B cell (primary cell): ENCODE measurements at regions of chr13 and their contacts with region 1.

Region 1: DNA sequence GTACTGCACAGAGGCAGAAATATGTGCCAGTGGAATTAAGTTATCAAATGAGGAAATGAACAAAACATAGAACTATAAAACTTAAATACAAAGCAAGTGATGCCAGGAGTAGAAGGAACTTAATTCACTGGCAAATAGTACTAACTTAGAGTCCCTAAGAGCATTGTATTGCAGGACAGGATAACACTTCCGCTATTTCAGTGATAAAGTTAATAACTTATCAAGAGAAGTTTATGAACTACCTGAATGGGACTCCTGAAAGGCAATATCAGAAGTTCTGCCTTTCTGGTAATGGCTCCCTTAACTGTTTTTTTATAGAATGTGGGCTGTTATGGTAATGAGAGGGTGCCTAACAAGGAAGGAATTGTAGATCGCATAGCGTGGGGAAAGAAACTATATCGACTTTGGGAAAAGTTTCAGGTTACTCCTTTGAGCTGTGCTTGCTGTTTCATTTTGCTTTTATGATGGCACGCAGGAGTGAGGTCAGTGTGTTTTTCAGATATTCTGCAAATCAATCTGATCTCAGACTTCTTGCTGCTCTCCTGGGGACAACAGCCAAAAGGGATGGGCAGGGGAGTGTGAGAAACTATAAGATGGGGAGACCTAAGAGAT is 95.3 kb upstream of the MLNR start:
- DNase-seq: no peak
- ATAC-seq: no peak
- H3K4me3 ChIP-seq: no peak overlapping the region
- H3K4me3 Mint-ChIP-seq: no peak overlapping the region
- H3K27ac ChIP-seq: no peak overlapping the region
- H3K27ac Mint-ChIP-seq: peak overlapping the region; percentile 3
- H3K4me1 ChIP-seq: no peaks in the 10 kb centered on the region
- H3K4me1 Mint-ChIP-seq: peaks cover 9% of the 10 kb centered on the region
- H3K27me3 ChIP-seq: no peaks in the 10 kb centered on the region
- H3K27me3 Mint-ChIP-seq: no peaks in the 10 kb centered on the region
- CTCF ChIP-seq: no peak

Region 2: DNA sequence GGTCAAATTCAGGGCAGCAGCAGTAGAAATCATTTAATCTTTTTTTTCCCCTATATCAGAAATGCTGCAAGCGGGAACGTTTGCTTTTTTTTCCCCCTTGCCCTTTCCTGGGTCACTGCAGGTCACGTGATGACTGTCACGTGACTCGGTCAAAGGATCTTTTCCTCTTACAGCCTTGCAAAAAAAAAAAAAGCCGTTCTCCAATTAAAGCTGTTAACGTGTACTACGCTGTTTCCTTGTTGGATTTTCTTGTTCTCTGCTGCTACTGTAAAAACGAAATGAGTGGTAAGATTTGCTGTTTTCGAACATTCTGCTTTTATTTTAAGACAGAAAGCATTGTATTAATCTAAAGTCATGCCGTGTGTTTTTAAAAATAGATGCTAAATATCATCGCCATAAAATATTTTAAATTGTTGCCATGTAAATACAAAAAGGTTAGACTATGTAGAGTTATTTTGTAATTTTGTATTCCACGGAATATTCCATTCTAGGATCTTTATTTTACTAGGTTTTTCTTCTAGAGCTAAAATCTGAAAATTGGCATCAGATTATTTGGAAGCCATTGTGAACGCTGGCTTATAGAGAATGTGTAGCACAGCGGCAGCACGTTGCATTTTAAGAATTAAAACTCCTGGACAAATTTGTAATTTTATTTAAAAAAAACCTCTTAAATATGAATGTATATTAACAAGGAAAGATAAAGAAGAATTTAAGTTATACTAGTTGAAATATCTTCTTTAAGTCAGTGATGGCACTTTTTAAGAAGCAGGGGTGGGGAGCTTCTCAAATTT is 14.5 kb before region 1 on chr13:
- CTCF ChIA-PET with region 1: no interaction called
- POLR2A ChIA-PET with region 1: no interaction called
- intact Hi-C with region 1: loop called (anchors 2 kb)
- DNase-seq: peak; percentile 86
- ATAC-seq: peak; percentile 82
- H3K4me3 ChIP-seq: peak overlapping the region; percentile 40 to 97 (median 79)
- H3K4me3 Mint-ChIP-seq: peak overlapping the region; percentile 95
- H3K27ac ChIP-seq: peak overlapping the region in 1 of 2 donors; percentile 63
- H3K27ac Mint-ChIP-seq: peak overlapping the region; percentile 89
- H3K4me1 ChIP-seq: peaks cover 3 to 6% of the 10 kb centered on the region in 2 donors
- H3K4me1 Mint-ChIP-seq: peaks cover 21% of the 10 kb centered on the region
- H3K27me3 ChIP-seq: no peaks in the 10 kb centered on the region
- H3K27me3 Mint-ChIP-seq: no peaks in the 10 kb centered on the region
- CTCF ChIP-seq: no peak